ENCODE measurements at regions of chr14 and their contacts with region 1.

Region 1: DNA sequence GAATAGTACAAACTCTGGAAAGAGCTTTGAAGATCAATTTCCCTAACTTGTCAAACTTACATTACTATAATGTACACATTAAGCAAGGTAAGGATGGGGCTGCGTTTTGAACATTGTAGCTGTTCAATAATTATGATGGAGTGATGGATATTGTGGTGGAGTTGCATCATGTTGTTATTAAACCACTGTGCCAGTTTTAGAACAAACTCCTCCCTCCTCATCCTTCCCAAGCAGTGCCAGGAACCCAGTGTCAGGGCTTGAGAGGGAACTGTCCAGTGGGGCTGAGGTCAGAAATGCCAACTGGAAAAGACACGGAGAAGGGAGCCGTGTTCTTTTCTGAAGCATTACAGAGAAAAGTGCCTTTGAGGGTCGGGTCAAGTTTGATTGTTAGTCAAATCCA is 31.9 kb upstream of the PAPOLA start:
- DNase-seq: no peak
- H3K4me3 ChIP-seq: no peak overlapping the region
- H3K4me3 Mint-ChIP-seq: no peak overlapping the region
- H3K27ac Mint-ChIP-seq: peak overlapping the region; percentile 87
- H3K4me1 ChIP-seq: peaks cover 56% of the 10 kb centered on the region
- H3K4me1 Mint-ChIP-seq: peaks cover 25% of the 10 kb centered on the region
- H3K27me3 ChIP-seq: no peaks in the 10 kb centered on the region
- H3K27me3 Mint-ChIP-seq: no peaks in the 10 kb centered on the region
- CTCF ChIP-seq: no peak

Region 2: GRCh38 chr14:96519970-96520369 is 49.6 kb after region 1 on chr14:
- CTCF ChIA-PET with region 1: no interaction called
- POLR2A ChIA-PET with region 1: no interaction called
- intact Hi-C with region 1: no loop called
- DNase-seq: no peak
- H3K4me3 ChIP-seq: no peak overlapping the region
- H3K4me3 Mint-ChIP-seq: no peak overlapping the region
- H3K27ac Mint-ChIP-seq: no peak overlapping the region
- H3K4me1 ChIP-seq: peaks cover 7% of the 10 kb centered on the region
- H3K4me1 Mint-ChIP-seq: peaks cover 11% of the 10 kb centered on the region
- H3K27me3 ChIP-seq: no peaks in the 10 kb centered on the region
- H3K27me3 Mint-ChIP-seq: no peaks in the 10 kb centered on the region
- CTCF ChIP-seq: no peak

Region 3: GRCh38 chr14:96538990-96539317 is 68.6 kb after region 1 on chr14:
- CTCF ChIA-PET with region 1: no interaction called
- POLR2A ChIA-PET with region 1: no interaction called
- intact Hi-C with region 1: loop called (anchors 1 kb)
- DNase-seq: peak in 1 of 2 experiments; percentile 5
- H3K4me3 ChIP-seq: no peak overlapping the region
- H3K4me3 Mint-ChIP-seq: peak overlapping the region; percentile 52
- H3K27ac Mint-ChIP-seq: peak overlapping the region; percentile 48
- H3K4me1 ChIP-seq: peaks cover 57% of the 10 kb centered on the region
- H3K4me1 Mint-ChIP-seq: peaks cover 19% of the 10 kb centered on the region
- H3K27me3 ChIP-seq: no peaks in the 10 kb centered on the region
- H3K27me3 Mint-ChIP-seq: no peaks in the 10 kb centered on the region
- CTCF ChIP-seq: no peak

Measured in Caco-2 (cell line).